CD8-positive, alpha-beta memory T cell (primary cell): ENCODE measurements at regions of chr12 and their contacts with region 1.

Region 1: DNA sequence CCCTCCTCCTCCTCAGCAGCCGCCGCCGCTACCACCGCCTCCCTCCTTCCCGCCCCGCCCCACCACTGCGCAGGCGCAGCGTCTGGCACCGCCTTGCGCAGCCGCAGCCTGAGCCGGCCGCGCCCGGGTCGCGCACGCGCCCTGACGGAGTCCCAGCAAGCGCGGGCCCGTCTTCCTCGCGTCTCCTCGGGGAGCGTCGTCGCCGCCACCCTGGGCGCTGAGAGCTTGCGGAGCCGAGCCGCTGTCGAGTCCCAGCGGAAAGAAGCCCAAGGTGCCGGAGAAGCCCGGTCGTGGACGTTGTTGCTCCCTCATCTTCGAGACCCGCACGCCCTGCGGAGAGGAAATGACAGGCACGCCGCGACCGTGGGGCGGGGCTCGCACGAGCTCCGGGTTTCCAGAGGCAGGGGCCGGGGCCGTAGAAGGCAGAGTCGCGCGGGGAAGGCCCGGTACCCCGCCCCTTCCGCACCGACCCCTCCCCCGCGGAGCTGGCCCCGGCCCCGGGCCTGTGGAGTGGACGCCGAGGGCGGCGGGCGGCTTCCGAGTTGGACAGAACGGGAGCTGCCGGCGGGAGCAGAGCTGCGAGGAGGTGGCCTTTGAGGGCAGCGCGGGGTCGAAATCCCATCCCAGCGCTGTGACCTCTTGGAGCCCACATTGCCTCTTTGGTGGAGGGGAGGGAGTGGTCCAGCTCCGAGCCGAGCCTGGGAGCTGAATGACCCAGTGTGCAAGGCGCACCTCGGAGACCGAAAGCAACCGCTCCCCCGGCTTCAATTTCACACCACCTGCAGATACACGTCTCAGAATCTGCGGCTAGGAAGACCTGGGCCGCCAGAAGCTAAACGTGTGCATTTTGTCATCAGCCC is 469 bp upstream of the RAB35 start:
- DNase-seq: peak; percentile 96 to 98 (median 97)
- H3K4me3 ChIP-seq: peak overlapping the region; percentile 68
- H3K4me3 Mint-ChIP-seq: peak overlapping the region; percentile 87 to 95 (median 91)
- H3K27ac ChIP-seq: peak overlapping the region; percentile 90
- H3K27ac Mint-ChIP-seq: peak overlapping the region; percentile 86 to 98 (median 94)
- H3K4me1 ChIP-seq: peaks cover 62% of the 10 kb centered on the region
- H3K4me1 Mint-ChIP-seq: peaks cover 61 to 85% (median 84%) of the 10 kb centered on the region in 3 donors
- H3K27me3 ChIP-seq: no peaks in the 10 kb centered on the region
- H3K27me3 Mint-ChIP-seq: no peaks in the 10 kb centered on the region

Region 2: GRCh38 chr12:119988782-119989668 is 128.0 kb before region 1 on chr12 and contains the start of gene BICDL1:
- CTCF ChIA-PET with region 1: interaction called, 8 read pairs
- POLR2A ChIA-PET with region 1: interaction called, 18 read pairs
- DNase-seq: peak; percentile 94 to 99 (median 99)
- H3K4me3 ChIP-seq: peak within 1 kb of the TSS; percentile 67
- H3K4me3 Mint-ChIP-seq: peak within 1 kb of the TSS; percentile 85 to 95 (median 87)
- H3K27ac ChIP-seq: peak within 1 kb of the TSS; percentile 75
- H3K27ac Mint-ChIP-seq: peak within 1 kb of the TSS; percentile 78 to 99 (median 97)
- H3K4me1 ChIP-seq: peaks cover 24% of the 10 kb centered on the region
- H3K4me1 Mint-ChIP-seq: peaks cover 34 to 44% (median 43%) of the 10 kb centered on the region in 3 donors
- H3K27me3 ChIP-seq: no peaks in the 10 kb centered on the region
- H3K27me3 Mint-ChIP-seq: no peaks in the 10 kb centered on the region
- total RNA-seq, gene BICDL1: 106 to 109 TPM

Region 3: DNA sequence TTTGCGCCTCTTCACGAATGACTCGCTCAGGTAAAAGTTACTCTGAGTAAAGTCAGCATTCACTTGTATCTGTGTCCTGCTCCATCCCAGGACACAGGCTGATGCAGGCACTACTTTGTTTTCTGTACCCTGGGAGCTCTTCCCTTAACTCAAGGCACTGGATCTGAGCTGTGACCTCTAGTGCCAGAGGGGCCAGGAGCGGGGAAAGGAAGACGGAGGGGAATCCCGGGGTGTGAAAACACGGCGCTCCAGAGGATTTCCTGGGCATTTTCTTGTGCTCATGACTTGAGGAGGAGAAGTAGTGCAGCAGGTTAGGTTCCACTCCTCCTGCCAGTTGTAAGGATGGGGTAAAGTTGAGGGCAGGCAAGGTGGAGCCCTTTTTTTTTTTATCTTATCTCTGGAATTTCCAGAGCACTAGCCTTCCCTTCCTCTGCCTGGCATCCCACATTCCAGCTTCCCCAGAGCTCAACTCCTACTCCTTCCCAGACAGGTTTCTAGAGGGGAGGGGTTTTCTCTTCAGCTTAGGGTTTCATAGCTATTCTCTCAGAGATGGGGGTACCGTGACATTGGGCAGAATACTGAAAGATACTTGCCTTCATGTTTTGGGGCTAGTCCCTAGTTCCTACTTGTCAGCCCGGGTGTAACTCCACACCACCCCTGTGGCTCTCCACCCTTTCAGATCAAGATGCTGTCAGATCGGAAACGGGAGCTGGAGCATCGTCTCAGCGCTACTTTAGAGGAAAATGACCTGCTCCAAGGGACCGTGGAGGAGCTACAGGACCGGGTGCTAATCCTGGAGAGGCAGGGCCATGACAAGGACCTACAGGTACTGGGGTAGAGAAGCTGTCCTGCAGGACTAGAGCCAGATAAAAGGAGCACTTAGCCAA is 52.7 kb before region 1 on chr12:
- CTCF ChIA-PET with region 1: no interaction called
- POLR2A ChIA-PET with region 1: no interaction called
- DNase-seq: no peak
- H3K4me3 ChIP-seq: no peak overlapping the region
- H3K4me3 Mint-ChIP-seq: no peak overlapping the region
- H3K27ac ChIP-seq: no peak overlapping the region
- H3K27ac Mint-ChIP-seq: peak overlapping the region in 6 of 8 donors; percentile 35 to 84 (median 66)
- H3K4me1 ChIP-seq: no peaks in the 10 kb centered on the region
- H3K4me1 Mint-ChIP-seq: peaks cover 3 to 10% (median 9%) of the 10 kb centered on the region in 3 donors
- H3K27me3 ChIP-seq: no peaks in the 10 kb centered on the region
- H3K27me3 Mint-ChIP-seq: no peaks in the 10 kb centered on the region

Region 4: DNA sequence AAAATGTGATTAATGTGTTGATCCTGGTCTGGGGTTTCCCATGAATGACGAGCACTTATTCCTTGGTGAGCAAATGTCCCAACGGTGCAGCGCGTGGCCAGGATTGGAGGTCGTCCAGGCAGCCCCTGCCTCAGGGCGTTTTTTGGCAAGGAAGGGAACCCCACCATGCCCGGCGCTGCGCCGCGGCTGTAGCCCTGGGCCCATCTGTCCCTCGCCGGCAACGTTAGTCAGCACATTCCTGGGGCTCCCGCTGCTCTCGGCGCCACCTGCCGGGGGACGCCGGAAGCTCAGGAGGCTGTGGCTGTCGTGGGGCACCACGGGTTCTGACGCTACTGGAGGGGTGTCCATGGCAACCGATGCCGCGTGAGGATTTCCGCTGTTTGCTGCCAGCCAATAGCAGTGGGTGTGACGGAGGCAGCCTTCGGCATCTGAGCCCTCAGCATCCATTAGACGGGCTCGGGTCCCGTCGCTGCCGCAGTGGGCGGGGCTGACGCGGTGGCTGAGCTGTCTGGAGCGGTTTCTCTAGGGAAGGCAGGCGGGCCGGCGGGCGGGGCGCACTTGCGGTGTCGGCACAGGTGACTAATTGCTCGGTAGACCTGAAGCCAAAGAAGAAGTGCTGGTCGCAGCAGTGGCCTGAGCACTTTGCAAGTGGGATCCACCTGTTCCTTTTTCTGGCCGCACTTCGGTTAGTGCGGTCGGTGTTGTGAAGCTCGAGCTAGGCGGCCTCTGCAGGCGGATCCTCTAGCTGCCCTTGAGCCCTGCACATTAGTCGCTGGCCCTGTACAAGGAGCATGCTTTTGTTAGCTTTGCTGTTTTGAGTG is 30.0 kb before region 1 on chr12:
- CTCF ChIA-PET with region 1: interaction called, 24 read pairs
- POLR2A ChIA-PET with region 1: interaction called, 10 read pairs
- DNase-seq: peak; percentile 99 to 100 (median 100)
- H3K4me3 ChIP-seq: peak overlapping the region; percentile 37
- H3K4me3 Mint-ChIP-seq: peak overlapping the region; percentile 65 to 91 (median 81)
- H3K27ac ChIP-seq: peak overlapping the region; percentile 29
- H3K27ac Mint-ChIP-seq: peak overlapping the region; percentile 86 to 96 (median 94)
- H3K4me1 ChIP-seq: peaks cover 14% of the 10 kb centered on the region
- H3K4me1 Mint-ChIP-seq: peaks cover 15 to 32% (median 29%) of the 10 kb centered on the region in 3 donors
- H3K27me3 ChIP-seq: no peaks in the 10 kb centered on the region
- H3K27me3 Mint-ChIP-seq: peaks cover 0 to 2% of the 10 kb centered on the region in 2 donors

Region 5: GRCh38 chr12:120132863-120133385 is 15.9 kb after region 1 on chr12:
- CTCF ChIA-PET with region 1: no interaction called
- POLR2A ChIA-PET with region 1: interaction called, 10 read pairs
- DNase-seq: no peak
- H3K4me3 ChIP-seq: no peak overlapping the region
- H3K4me3 Mint-ChIP-seq: no peak overlapping the region
- H3K27ac ChIP-seq: no peak overlapping the region
- H3K27ac Mint-ChIP-seq: no peak overlapping the region
- H3K4me1 ChIP-seq: no peaks in the 10 kb centered on the region
- H3K4me1 Mint-ChIP-seq: no peaks in the 10 kb centered on the region
- H3K27me3 ChIP-seq: no peaks in the 10 kb centered on the region
- H3K27me3 Mint-ChIP-seq: no peaks in the 10 kb centered on the region

Region 6: GRCh38 chr12:120199595-120200306 is 82.7 kb after region 1 on chr12:
- CTCF ChIA-PET with region 1: interaction called, 6 read pairs
- POLR2A ChIA-PET with region 1: interaction called, 35 read pairs
- DNase-seq: peak in 2 of 5 donors; percentile 14 to 23
- H3K4me3 ChIP-seq: peak overlapping the region; percentile 99
- H3K4me3 Mint-ChIP-seq: peak overlapping the region; percentile 85 to 99 (median 98)
- H3K27ac ChIP-seq: peak overlapping the region; percentile 86
- H3K27ac Mint-ChIP-seq: peak overlapping the region; percentile 89 to 99 (median 96)
- H3K4me1 ChIP-seq: peaks cover 46% of the 10 kb centered on the region
- H3K4me1 Mint-ChIP-seq: peaks cover 36 to 51% (median 44%) of the 10 kb centered on the region in 3 donors
- H3K27me3 ChIP-seq: no peaks in the 10 kb centered on the region
- H3K27me3 Mint-ChIP-seq: peaks cover 0 to 1% of the 10 kb centered on the region in 2 donors